ENCODE measurements at regions of chr2 and their contacts with region 1.

Region 1: GRCh38 chr2:42792583-42793333 is at the start of gene HAAO:
- DNase-seq: peak; percentile 91
- ATAC-seq: peak; percentile 71
- H3K4me3 ChIP-seq: peak within 1 kb of the TSS; percentile 98 to 99 (median 99)
- H3K27ac ChIP-seq: peak within 1 kb of the TSS; percentile 95
- H3K4me1 ChIP-seq: peaks cover 73% of the 10 kb centered on the region
- H3K27me3 ChIP-seq: no peaks in the 10 kb centered on the region; a peak in 1 of 5 replicates
- CTCF ChIP-seq: peak; percentile 55
- EP300 ChIP-seq: peak; percentile 91 to 95
- POLR2A ChIP-seq: peak in 1 of 2 experiments; percentile 97; a peak in 2 of 4 replicates
- RAD21 ChIP-seq: peak; percentile 88
- total RNA-seq, gene HAAO: 34.1 and 42.7 TPM in 2 replicates

Region 2: DNA sequence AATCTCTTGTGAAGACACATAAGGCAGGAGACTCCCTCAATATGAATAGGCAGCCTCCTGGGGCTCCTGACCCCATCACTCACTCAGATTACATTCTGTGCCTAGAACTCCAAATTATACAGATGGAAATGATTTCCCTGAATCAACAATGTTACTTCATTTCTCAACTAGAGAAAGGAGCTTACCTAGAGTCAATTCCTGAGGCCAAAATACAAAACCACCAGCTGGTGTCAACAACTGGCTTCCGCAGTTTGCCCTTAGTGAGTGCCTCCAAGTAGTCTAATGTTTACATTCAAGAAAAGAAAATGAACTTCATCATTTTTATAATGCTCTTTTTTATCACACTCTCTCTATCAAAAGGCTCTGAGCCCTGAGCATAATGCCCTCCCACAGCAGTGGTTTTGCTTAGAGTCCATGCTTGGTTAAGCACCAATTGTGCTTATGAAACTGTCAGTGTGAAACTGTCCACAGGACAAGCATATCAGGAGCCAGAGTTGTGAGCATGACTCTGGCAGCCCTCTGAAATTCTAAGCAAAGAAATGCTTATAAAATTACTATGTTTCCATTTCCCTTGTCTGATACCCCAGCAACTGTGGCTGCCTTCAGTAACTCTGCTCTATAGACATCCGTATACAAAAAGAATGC is 1050.7 kb before region 1 on chr2:
- CTCF ChIA-PET with region 1: no interaction called
- POLR2A ChIA-PET with region 1: no interaction called
- in situ Hi-C with region 1: no loop called
- intact Hi-C with region 1: no loop called
- DNase-seq: no peak
- ATAC-seq: no peak
- H3K4me3 ChIP-seq: no peak overlapping the region
- H3K27ac ChIP-seq: no peak overlapping the region
- H3K4me1 ChIP-seq: no peaks in the 10 kb centered on the region
- H3K27me3 ChIP-seq: no peaks in the 10 kb centered on the region
- CTCF ChIP-seq: no peak
- EP300 ChIP-seq: no peak
- POLR2A ChIP-seq: no peak
- RAD21 ChIP-seq: no peak

Region 3: DNA sequence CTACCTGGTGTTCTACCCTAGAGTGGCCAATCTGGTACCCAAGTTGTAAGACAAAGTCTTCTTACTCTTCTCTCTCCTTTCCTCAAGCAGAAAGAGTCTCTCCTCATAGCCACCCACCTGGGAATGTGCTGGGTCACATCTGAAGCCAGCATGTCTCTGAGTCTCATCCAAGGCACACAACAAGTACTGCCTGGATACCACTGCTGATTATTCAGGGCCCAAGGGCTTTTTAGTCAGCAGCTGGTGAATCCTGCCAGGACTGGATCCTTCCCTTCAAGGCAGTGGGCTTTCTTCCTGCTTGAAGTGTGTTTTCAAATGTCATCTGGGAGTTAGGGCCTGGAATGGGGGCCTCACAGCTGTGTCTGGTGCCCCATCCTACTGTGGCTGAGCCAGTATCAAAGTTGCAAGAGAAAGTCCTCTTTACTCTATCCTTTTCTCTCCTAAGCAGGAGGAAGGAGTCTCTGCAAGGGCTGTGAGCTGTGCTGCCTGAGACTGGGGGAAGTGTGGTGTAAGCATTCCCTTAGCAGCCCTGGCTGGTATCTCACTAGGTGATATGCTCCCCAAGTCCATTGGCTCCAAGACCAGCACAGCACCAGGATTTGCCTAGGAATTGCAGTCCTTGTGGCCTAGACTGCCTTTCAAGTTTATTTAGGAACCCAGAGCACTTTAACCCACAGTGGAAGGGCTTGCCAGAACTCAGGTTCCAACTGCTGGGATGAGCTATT is 56.0 kb before region 1 on chr2:
- CTCF ChIA-PET with region 1: no interaction called
- POLR2A ChIA-PET with region 1: no interaction called
- in situ Hi-C with region 1: no loop called
- intact Hi-C with region 1: no loop called
- DNase-seq: no peak
- ATAC-seq: no peak; the same call in 2 of the 3 replicates
- H3K4me3 ChIP-seq: no peak overlapping the region
- H3K27ac ChIP-seq: no peak overlapping the region
- H3K4me1 ChIP-seq: peaks cover 10% of the 10 kb centered on the region
- H3K27me3 ChIP-seq: no peaks in the 10 kb centered on the region
- CTCF ChIP-seq: no peak
- EP300 ChIP-seq: no peak
- POLR2A ChIP-seq: no peak
- RAD21 ChIP-seq: no peak

Region 4: GRCh38 chr2:42777883-42778805 is 14.6 kb before region 1 on chr2:
- CTCF ChIA-PET with region 1: no interaction called
- POLR2A ChIA-PET with region 1: interaction called, 20 read pairs
- in situ Hi-C with region 1: no loop called
- intact Hi-C with region 1: no loop called
- DNase-seq: no peak
- ATAC-seq: no peak
- H3K4me3 ChIP-seq: no peak overlapping the region
- H3K27ac ChIP-seq: no peak overlapping the region
- H3K4me1 ChIP-seq: peaks cover 6% of the 10 kb centered on the region; the same call in 1 of the 2 replicates
- H3K27me3 ChIP-seq: no peaks in the 10 kb centered on the region
- CTCF ChIP-seq: no peak
- EP300 ChIP-seq: no peak
- POLR2A ChIP-seq: no peak
- RAD21 ChIP-seq: no peak

Region 5: DNA sequence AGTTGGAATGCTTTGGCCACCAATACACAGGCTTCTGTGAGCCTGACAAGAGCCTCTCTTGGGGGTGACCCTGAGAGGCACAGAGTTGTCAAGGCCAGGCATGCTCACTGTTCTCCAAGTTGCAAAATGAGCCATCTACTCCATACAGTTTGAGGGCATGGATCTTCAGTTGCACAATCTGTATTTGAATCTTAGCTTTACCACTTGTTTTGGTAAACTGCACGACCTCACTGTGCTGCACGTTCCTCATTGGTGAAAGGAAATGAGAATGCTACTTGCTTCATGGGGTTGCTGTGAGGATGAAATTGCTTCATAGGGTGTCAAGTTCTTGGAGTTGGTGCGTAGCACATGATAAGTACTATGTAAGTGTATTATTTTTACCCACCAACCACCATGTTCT is 11.6 kb after region 1 on chr2:
- CTCF ChIA-PET with region 1: interaction called, 5 read pairs
- POLR2A ChIA-PET with region 1: interaction called, 287 read pairs
- in situ Hi-C with region 1: no loop called
- intact Hi-C with region 1: loop called (anchors 1 kb)
- DNase-seq: no peak
- ATAC-seq: peak; percentile 55
- H3K4me3 ChIP-seq: no peak overlapping the region
- H3K27ac ChIP-seq: no peak overlapping the region
- H3K4me1 ChIP-seq: peaks cover 24% of the 10 kb centered on the region
- H3K27me3 ChIP-seq: no peaks in the 10 kb centered on the region; a peak in 1 of 5 replicates
- CTCF ChIP-seq: no peak
- EP300 ChIP-seq: no peak
- POLR2A ChIP-seq: 0 out of 4 replicates have a peak, but pooled peaks of 1 of the 2 experiments have one; percentile 15
- RAD21 ChIP-seq: no peak

Region 6: GRCh38 chr2:42810121-42810970 is 17.6 kb after region 1 on chr2:
- CTCF ChIA-PET with region 1: interaction called, 7 read pairs
- POLR2A ChIA-PET with region 1: interaction called, 287 read pairs
- in situ Hi-C with region 1: no loop called
- intact Hi-C with region 1: loop called (anchors 1 kb)
- DNase-seq: peak; percentile 94
- ATAC-seq: peak; percentile 84
- H3K4me3 ChIP-seq: peak overlapping the region; percentile 79 to 93 (median 80)
- H3K27ac ChIP-seq: peak overlapping the region; percentile 98
- H3K4me1 ChIP-seq: peaks cover 19% of the 10 kb centered on the region
- H3K27me3 ChIP-seq: no peaks in the 10 kb centered on the region; a peak in 2 of 5 replicates
- CTCF ChIP-seq: 0 out of 2 replicates have a peak, but pooled peaks have one; percentile 31
- EP300 ChIP-seq: peak; percentile 34 to 36; a peak in 2 of 4 replicates
- POLR2A ChIP-seq: peak; percentile 82 to 95
- RAD21 ChIP-seq: peak; percentile 52; the same call in 1 of the 2 replicates

Region 7: GRCh38 chr2:42935692-42936681 is 143.2 kb after region 1 on chr2:
- CTCF ChIA-PET with region 1: no interaction called
- POLR2A ChIA-PET with region 1: no interaction called
- in situ Hi-C with region 1: no loop called
- intact Hi-C with region 1: no loop called
- DNase-seq: no peak
- ATAC-seq: no peak
- H3K4me3 ChIP-seq: no peak overlapping the region
- H3K27ac ChIP-seq: no peak overlapping the region
- H3K4me1 ChIP-seq: peaks cover 94% of the 10 kb centered on the region
- H3K27me3 ChIP-seq: no peaks in the 10 kb centered on the region; a peak in 1 of 5 replicates
- CTCF ChIP-seq: no peak
- EP300 ChIP-seq: no peak
- POLR2A ChIP-seq: no peak
- RAD21 ChIP-seq: no peak

Region 8: GRCh38 chr2:44033947-44034346 is 1241.2 kb after region 1 on chr2:
- CTCF ChIA-PET with region 1: no interaction called
- POLR2A ChIA-PET with region 1: no interaction called
- in situ Hi-C with region 1: no loop called
- intact Hi-C with region 1: no loop called
- DNase-seq: no peak
- ATAC-seq: no peak
- H3K4me3 ChIP-seq: no peak overlapping the region
- H3K27ac ChIP-seq: no peak overlapping the region
- H3K4me1 ChIP-seq: no peaks in the 10 kb centered on the region
- H3K27me3 ChIP-seq: peaks cover 0 to 15% of the 10 kb centered on the region in 2 experiments; a peak in 3 of 5 replicates
- CTCF ChIP-seq: no peak
- EP300 ChIP-seq: no peak
- POLR2A ChIP-seq: no peak
- RAD21 ChIP-seq: no peak

Measured in HepG2 (cell line).